Activated naive CD4-positive, alpha-beta T cell treated with anti-CD3 and anti-CD28 coated beads, Interleukin-2, amount 10 ng/mL, durations not matched to agents 7 days and 5 days (primary cell): ENCODE measurements at regions of chr1 and their contacts with region 1.

Region 1: DNA sequence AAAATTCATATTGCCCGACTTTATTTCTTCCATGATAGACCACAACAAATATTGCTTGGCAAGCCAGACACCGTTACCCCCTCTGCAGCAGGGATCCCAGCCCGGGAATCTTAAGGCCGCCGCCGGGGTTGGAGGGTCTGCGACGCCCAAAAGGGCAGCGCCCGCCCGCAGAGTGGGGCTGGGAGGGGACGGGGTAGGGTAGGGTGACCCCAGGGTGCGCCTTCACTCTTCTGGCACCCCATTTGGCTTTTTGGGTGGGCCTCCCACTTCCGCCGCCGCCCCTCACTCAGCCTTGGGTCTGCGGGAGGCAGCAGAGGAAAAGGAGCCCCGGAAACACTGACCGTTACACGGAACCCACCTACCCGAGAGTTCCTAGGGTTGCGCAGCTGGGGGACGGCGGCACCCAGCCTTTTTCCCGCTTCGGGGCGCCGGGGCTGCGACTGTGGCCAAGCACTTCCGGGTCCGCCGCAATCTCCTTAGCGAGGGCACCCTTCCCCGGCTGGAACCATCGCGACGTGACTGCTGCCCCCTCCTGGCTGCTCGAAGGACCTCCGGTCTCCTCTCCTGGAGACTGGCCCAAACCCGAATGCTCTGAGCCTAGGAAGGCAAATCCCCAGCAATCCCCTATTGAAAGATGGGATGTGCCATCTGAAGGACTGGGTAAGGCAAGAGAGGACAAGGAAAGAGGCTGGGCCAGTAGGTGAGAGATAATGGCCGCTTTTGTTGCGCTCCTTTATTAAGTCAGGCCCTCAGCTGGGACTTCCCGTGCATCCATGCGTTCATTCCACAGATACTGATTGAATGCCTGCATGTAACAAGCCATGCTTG is at the start of gene PIGC:
- DNase-seq: peak; percentile 95
- H3K4me3 Mint-ChIP-seq: peak within 1 kb of the TSS; percentile 89
- H3K27ac Mint-ChIP-seq: peak within 1 kb of the TSS; percentile 88
- H3K4me1 Mint-ChIP-seq: peaks cover 36% of the 10 kb centered on the region
- H3K27me3 Mint-ChIP-seq: no peaks in the 10 kb centered on the region

Region 2: GRCh38 chr1:172002725-172003345 is 441.0 kb before region 1 on chr1:
- CTCF ChIA-PET with region 1: interaction called, 12 read pairs
- DNase-seq: peak; percentile 41
- H3K4me3 Mint-ChIP-seq: no peak overlapping the region
- H3K27ac Mint-ChIP-seq: no peak overlapping the region
- H3K4me1 Mint-ChIP-seq: no peaks in the 10 kb centered on the region
- H3K27me3 Mint-ChIP-seq: no peaks in the 10 kb centered on the region